Endothelial cell of umbilical vein (primary cell): ENCODE measurements at regions of chr10 and their contacts with region 1.

Region 1: GRCh38 chr10:4353964-4354363 is 472.0 kb upstream of the AKR1E2 start:
- DNase-seq: peak; percentile 96
- H3K4me3 ChIP-seq: no peak overlapping the region
- H3K27ac ChIP-seq: peak overlapping the region; percentile 94
- H3K4me1 ChIP-seq: peaks cover 46% of the 10 kb centered on the region
- H3K27me3 ChIP-seq: no peaks in the 10 kb centered on the region
- CTCF ChIP-seq: no peak
- POLR2A ChIP-seq: no peak

Region 2: GRCh38 chr10:3239066-3239919 is 1114.7 kb before region 1 on chr10:
- CTCF ChIA-PET with region 1: no interaction called
- POLR2A ChIA-PET with region 1: no interaction called
- dilution Hi-C with region 1: no loop called
- intact Hi-C with region 1: loop called (anchors 10 kb)
- DNase-seq: peak; percentile 78
- H3K4me3 ChIP-seq: no peak overlapping the region
- H3K27ac ChIP-seq: peak overlapping the region; percentile 80
- H3K4me1 ChIP-seq: peaks cover 11% of the 10 kb centered on the region
- H3K27me3 ChIP-seq: no peaks in the 10 kb centered on the region
- CTCF ChIP-seq: peak; percentile 86 to 87
- POLR2A ChIP-seq: no peak

Region 3: DNA sequence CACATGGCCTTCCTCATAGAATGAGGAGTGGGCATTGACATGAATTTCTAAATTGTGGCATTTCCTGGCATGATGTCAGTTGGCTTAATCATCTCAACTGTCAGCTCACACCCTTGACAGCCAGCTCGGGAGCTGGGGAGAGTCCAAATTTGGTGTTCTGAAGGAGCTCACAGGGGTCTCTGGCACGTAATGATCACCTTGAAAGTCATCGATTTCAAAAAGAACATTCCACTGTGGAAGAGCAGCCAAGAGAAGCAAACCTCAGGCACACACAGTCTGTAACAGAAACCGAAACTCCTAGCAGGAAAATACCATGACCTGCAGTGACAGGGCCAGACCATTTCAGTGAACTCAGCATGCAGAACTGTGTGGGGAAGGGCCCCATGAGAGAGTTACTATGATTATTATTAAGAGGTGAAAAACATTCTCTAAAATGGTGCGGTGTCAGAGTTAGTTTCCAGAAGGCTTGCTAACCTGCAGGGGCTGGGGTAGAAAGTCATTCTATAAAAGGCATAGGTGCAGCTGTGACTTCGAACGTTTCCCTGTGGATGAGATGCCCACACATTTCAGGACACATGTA is 542.6 kb before region 1 on chr10:
- CTCF ChIA-PET with region 1: no interaction called
- POLR2A ChIA-PET with region 1: no interaction called
- dilution Hi-C with region 1: no loop called
- intact Hi-C with region 1: loop called (anchors 1 kb)
- DNase-seq: peak; percentile 70
- H3K4me3 ChIP-seq: no peak overlapping the region
- H3K27ac ChIP-seq: peak overlapping the region; percentile 100
- H3K4me1 ChIP-seq: peaks cover 55% of the 10 kb centered on the region
- H3K27me3 ChIP-seq: no peaks in the 10 kb centered on the region
- CTCF ChIP-seq: no peak
- POLR2A ChIP-seq: peak; percentile 28

Region 4: GRCh38 chr10:4043897-4044665 is 309.9 kb before region 1 on chr10:
- CTCF ChIA-PET with region 1: no interaction called
- POLR2A ChIA-PET with region 1: no interaction called
- dilution Hi-C with region 1: no loop called
- intact Hi-C with region 1: loop called (anchors 5 kb)
- DNase-seq: peak; percentile 97
- H3K4me3 ChIP-seq: no peak overlapping the region
- H3K27ac ChIP-seq: peak overlapping the region; percentile 66
- H3K4me1 ChIP-seq: peaks cover 21% of the 10 kb centered on the region
- H3K27me3 ChIP-seq: no peaks in the 10 kb centered on the region
- CTCF ChIP-seq: no peak
- POLR2A ChIP-seq: peak; percentile 67

Region 5: DNA sequence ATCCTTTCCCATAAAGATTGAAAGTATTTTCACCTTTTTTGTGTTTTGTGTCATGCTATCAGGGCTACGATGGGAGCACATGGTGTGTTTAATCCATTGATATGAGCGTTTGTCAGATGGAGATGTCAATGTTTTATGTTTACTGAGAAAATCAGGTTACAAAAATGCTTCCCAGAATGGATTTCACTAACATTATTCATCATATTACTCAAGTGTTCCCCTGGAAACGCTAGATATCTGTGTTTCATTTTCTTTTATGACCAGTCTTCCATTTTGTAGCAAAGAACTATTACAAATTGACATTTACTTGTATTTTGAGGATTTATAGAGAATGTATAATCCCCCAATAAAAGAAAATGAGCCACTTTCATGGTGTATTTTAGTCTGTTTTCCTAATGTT is 178.5 kb after region 1 on chr10:
- CTCF ChIA-PET with region 1: no interaction called
- POLR2A ChIA-PET with region 1: no interaction called
- dilution Hi-C with region 1: no loop called
- intact Hi-C with region 1: no loop called
- DNase-seq: no peak
- H3K4me3 ChIP-seq: no peak overlapping the region
- H3K27ac ChIP-seq: no peak overlapping the region
- H3K4me1 ChIP-seq: no peaks in the 10 kb centered on the region
- H3K27me3 ChIP-seq: no peaks in the 10 kb centered on the region
- CTCF ChIP-seq: no peak
- POLR2A ChIP-seq: no peak

Region 6: DNA sequence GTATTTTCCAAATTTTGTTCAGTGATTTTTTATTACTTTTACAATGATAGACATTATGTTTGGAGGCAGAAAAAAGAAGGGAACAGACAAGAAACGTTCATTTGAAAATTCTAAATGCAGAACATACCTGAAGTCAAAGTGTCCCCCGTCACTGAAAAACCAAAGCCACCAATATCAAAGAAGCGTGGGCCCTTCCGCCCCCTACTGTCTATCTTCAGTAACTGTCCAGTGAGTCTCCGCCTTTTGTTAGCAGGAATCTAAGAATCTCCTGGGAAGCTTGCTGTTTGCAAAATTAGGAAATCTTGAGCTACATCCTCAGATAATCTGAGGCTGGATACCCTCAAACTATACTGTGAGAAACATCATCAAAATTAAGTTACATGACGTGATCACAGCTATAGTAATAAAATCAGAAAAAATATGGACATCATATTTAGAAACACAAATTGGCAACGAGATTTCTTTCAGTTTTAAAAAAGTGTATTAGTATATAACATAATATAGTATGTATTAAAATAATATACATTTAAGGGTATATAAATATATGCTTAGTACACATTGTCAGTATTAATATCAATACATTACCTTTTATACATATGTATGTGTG is 302.7 kb after region 1 on chr10:
- CTCF ChIA-PET with region 1: interaction called, 3 read pairs
- POLR2A ChIA-PET with region 1: no interaction called
- dilution Hi-C with region 1: no loop called
- intact Hi-C with region 1: loop called (anchors 5 kb)
- DNase-seq: peak; percentile 80
- H3K4me3 ChIP-seq: no peak overlapping the region
- H3K27ac ChIP-seq: peak overlapping the region; percentile 47
- H3K4me1 ChIP-seq: peaks cover 4% of the 10 kb centered on the region
- H3K27me3 ChIP-seq: no peaks in the 10 kb centered on the region
- CTCF ChIP-seq: peak; percentile 77 to 82
- POLR2A ChIP-seq: no peak

Region 7: GRCh38 chr10:5064656-5065055 is 710.7 kb after region 1 on chr10:
- CTCF ChIA-PET with region 1: no interaction called
- POLR2A ChIA-PET with region 1: no interaction called
- dilution Hi-C with region 1: no loop called
- intact Hi-C with region 1: no loop called
- DNase-seq: no peak
- H3K4me3 ChIP-seq: no peak overlapping the region
- H3K27ac ChIP-seq: no peak overlapping the region
- H3K4me1 ChIP-seq: no peaks in the 10 kb centered on the region
- H3K27me3 ChIP-seq: no peaks in the 10 kb centered on the region
- CTCF ChIP-seq: no peak
- POLR2A ChIP-seq: no peak